ENCODE measurements at regions of chr5 and their contacts with region 1.

Region 1: DNA sequence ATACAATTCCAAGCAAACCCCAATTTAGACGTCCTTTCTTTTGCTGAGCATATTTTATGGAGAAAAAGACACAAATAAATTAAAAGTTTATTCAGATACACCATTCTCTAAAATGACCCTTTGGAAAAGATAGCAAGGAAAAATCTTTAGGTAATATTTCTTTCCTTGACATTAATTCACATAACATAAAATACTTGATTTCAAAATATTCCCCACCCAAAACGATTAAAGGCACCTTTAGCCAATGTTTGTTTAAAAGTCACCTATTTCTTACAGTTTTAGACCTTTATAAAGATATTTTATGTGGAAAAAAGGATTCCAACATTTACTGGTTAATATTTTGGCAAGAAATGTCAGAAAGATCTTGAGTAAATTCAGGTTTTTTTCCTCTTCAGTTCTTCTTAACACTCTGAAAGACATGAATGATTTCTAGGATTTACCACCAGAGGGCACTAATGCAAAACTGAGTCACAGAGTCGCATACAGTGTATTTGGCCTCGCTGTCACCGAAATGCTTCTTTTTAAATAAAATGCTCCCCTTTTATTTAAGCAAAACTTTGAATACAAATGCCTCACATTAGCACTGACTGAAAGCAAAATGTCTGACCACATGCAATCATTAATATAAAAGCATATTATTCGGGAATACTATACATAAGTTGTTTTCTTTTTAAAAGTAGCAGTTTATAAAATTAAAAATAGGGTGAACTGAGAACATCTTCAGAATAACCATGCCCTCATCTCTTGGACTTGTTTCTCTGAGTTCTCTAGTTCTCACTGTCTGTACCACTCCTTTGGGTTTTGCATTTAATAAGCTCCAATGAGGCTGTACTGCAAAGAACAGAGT is 122.5 kb downstream of the SLC1A3 start:
- DNase-seq: peak in 4 of 14 experiments; percentile 34 to 77 (median 68)
- ATAC-seq: peak; percentile 62
- H3K4me3 ChIP-seq: no peak overlapping the region
- H3K4me3 Mint-ChIP-seq: no peak overlapping the region
- H3K27ac ChIP-seq: no peak overlapping the region
- H3K27ac Mint-ChIP-seq: no peak overlapping the region
- H3K4me1 ChIP-seq: peaks cover 11% of the 10 kb centered on the region
- H3K4me1 Mint-ChIP-seq: peaks cover 13% of the 10 kb centered on the region
- H3K27me3 ChIP-seq: no peaks in the 10 kb centered on the region
- H3K27me3 Mint-ChIP-seq: peaks cover 4% of the 10 kb centered on the region
- CTCF ChIP-seq: peak; percentile 83

Region 2: GRCh38 chr5:36717131-36717695 is 11.7 kb before region 1 on chr5:
- CTCF ChIA-PET with region 1: no interaction called
- POLR2A ChIA-PET with region 1: no interaction called
- intact Hi-C with region 1: no loop called
- DNase-seq: no peak
- ATAC-seq: no peak
- H3K4me3 ChIP-seq: no peak overlapping the region
- H3K4me3 Mint-ChIP-seq: no peak overlapping the region
- H3K27ac ChIP-seq: no peak overlapping the region
- H3K27ac Mint-ChIP-seq: no peak overlapping the region
- H3K4me1 ChIP-seq: no peaks in the 10 kb centered on the region
- H3K4me1 Mint-ChIP-seq: no peaks in the 10 kb centered on the region
- H3K27me3 ChIP-seq: no peaks in the 10 kb centered on the region
- H3K27me3 Mint-ChIP-seq: no peaks in the 10 kb centered on the region
- CTCF ChIP-seq: no peak

Region 3: DNA sequence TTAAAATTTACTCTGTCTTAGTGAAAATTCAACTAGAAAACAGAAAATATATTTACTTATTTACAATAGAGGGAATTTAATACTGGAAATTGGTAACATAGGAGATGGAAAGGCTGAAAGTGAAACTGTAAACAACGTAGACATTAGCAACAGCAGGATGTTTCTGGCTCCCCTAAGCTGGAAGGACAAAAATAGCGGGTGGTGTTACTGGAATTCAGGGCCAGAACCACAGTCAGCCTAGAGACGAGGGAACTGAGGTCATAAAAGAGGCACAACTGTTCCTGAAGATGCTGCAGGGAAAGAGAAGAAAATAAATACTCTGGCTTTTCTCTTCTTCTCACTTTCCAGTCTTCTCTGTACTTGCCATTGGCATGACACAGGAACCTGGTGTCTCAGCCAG is 67.2 kb after region 1 on chr5:
- CTCF ChIA-PET with region 1: no interaction called
- POLR2A ChIA-PET with region 1: no interaction called
- intact Hi-C with region 1: no loop called
- DNase-seq: no peak
- ATAC-seq: no peak
- H3K4me3 ChIP-seq: no peak overlapping the region
- H3K4me3 Mint-ChIP-seq: no peak overlapping the region
- H3K27ac ChIP-seq: no peak overlapping the region
- H3K27ac Mint-ChIP-seq: no peak overlapping the region
- H3K4me1 ChIP-seq: no peaks in the 10 kb centered on the region
- H3K4me1 Mint-ChIP-seq: no peaks in the 10 kb centered on the region
- H3K27me3 ChIP-seq: no peaks in the 10 kb centered on the region
- H3K27me3 Mint-ChIP-seq: peaks cover 7% of the 10 kb centered on the region
- CTCF ChIP-seq: no peak

Region 4: DNA sequence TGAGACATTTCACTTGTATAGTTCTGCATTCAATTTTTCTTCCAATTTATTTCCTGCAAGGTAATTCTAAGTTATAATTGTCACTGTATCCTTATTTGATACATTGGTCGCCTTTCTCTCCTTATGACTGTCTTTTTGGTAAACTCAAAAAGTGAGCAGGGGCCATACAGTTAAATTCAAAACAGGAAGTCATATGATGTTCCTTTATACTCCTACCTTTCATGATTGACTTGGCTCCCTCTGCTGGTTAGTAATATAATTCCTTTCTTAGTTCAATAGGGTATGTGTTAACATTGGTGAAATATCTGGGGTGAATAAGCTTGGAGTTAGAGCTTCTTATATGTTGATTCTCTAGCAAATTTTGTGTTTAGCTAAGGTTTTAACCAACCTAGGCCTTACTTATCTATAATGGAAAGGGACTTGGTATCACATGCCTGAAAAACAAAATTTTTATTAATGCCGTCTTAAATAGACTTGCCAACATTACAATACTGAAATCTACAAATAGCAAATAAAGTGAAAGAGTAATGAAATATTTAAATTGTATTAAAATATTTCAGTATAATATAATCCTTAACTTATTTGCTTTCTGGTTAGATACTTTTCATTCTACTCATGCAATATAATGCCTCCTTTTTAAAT is 141.6 kb after region 1 on chr5:
- CTCF ChIA-PET with region 1: interaction called, 6 read pairs
- POLR2A ChIA-PET with region 1: interaction called, 13 read pairs
- intact Hi-C with region 1: loop called (anchors 2 kb)
- DNase-seq: peak in 3 of 14 experiments; percentile 81 to 83 (median 81)
- ATAC-seq: peak; percentile 73
- H3K4me3 ChIP-seq: no peak overlapping the region
- H3K4me3 Mint-ChIP-seq: peak overlapping the region; percentile 2
- H3K27ac ChIP-seq: no peak overlapping the region
- H3K27ac Mint-ChIP-seq: peak overlapping the region; percentile 21
- H3K4me1 ChIP-seq: peaks cover 11% of the 10 kb centered on the region
- H3K4me1 Mint-ChIP-seq: peaks cover 53% of the 10 kb centered on the region
- H3K27me3 ChIP-seq: no peaks in the 10 kb centered on the region
- H3K27me3 Mint-ChIP-seq: no peaks in the 10 kb centered on the region
- CTCF ChIP-seq: peak; percentile 72

Region 5: DNA sequence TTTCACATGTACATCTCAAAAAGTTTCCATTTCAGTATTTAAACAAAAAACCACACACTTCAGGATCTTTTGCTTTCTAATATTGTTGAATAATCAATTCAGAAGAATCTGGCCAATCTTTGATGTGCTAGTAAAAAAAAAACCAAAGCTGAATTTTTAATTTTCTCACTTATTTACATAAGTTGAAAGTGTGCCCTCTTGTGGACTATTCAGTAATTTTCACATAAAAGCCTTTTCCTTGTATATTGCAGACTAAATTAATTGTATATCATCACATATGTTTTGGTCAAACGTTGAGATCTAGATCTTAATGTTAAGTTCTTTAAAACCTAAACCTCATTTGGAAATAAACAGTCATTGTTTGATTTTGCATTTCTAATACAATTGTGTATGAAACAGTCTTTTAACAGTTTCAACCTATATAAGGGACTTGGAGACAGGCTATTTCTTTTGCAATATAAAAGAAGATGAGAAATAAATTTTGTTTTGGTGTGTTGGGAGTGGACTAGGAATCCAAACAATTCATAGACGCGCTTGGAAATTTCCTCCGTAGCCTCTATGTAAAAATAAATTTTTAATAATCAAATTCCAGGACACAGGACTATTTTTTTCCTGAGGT is 215.8 kb after region 1 on chr5:
- CTCF ChIA-PET with region 1: no interaction called
- POLR2A ChIA-PET with region 1: interaction called, 3 read pairs
- intact Hi-C with region 1: loop called (anchors 2 to 5 kb)
- DNase-seq: peak in 3 of 14 experiments; percentile 58 to 75 (median 75)
- ATAC-seq: no peak
- H3K4me3 ChIP-seq: no peak overlapping the region
- H3K4me3 Mint-ChIP-seq: no peak overlapping the region
- H3K27ac ChIP-seq: no peak overlapping the region
- H3K27ac Mint-ChIP-seq: peak overlapping the region; percentile 7
- H3K4me1 ChIP-seq: no peaks in the 10 kb centered on the region
- H3K4me1 Mint-ChIP-seq: peaks cover 75% of the 10 kb centered on the region
- H3K27me3 ChIP-seq: no peaks in the 10 kb centered on the region
- H3K27me3 Mint-ChIP-seq: no peaks in the 10 kb centered on the region
- CTCF ChIP-seq: peak; percentile 79

Region 6: DNA sequence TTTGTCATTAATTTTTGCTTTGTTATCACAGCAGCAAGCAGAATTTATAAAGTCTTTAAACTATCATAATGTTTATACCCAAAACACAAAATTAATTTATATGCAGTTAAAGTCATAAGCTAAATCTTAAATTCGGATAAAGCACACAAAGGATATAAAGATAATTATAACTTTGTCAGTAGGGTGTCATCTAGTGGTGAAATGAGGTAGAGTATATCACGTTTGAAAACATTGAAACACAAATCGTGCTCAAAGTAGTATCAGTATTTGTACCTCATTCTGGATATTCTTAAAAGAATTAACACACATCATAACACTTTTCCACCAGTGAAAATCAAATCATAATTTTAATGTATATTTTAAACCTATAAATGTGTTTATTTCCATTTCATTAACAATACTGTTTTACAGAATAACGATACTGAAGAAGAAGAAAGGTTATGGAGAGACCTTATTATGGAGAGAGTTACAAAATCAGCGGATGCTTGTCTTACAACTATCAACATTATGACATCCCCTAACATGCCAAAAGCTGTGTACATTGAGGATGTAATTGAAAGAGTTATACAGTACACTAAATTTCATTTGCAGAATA is 277.1 kb after region 1 on chr5:
- CTCF ChIA-PET with region 1: no interaction called
- POLR2A ChIA-PET with region 1: no interaction called
- intact Hi-C with region 1: loop called in 1 of 2 experiments (anchors 2 kb)
- DNase-seq: peak in 3 of 14 experiments; percentile 16 to 26 (median 26)
- ATAC-seq: peak; percentile 39
- H3K4me3 ChIP-seq: no peak overlapping the region
- H3K4me3 Mint-ChIP-seq: no peak overlapping the region
- H3K27ac ChIP-seq: no peak overlapping the region
- H3K27ac Mint-ChIP-seq: no peak overlapping the region
- H3K4me1 ChIP-seq: no peaks in the 10 kb centered on the region
- H3K4me1 Mint-ChIP-seq: no peaks in the 10 kb centered on the region
- H3K27me3 ChIP-seq: no peaks in the 10 kb centered on the region
- H3K27me3 Mint-ChIP-seq: no peaks in the 10 kb centered on the region
- CTCF ChIP-seq: peak; percentile 56

Measured in CD4-positive, alpha-beta T cell (primary cell).